Activated B cell treated with CpG ODN at 0.5 μM for 24 hours (primary cell): ENCODE measurements at regions of chr6 and their contacts with region 1.

Region 1: GRCh38 chr6:54665278-54665677 is 181.3 kb upstream of the FAM83B start:
- DNase-seq: no peak
- ATAC-seq: no peak
- H3K4me3 Mint-ChIP-seq: no peak overlapping the region
- H3K27ac Mint-ChIP-seq: no peak overlapping the region
- H3K4me1 Mint-ChIP-seq: no peaks in the 10 kb centered on the region
- H3K27me3 Mint-ChIP-seq: no peaks in the 10 kb centered on the region
- CTCF ChIP-seq: no peak

Region 2: GRCh38 chr6:54655162-54655561 is 10.1 kb before region 1 on chr6:
- CTCF ChIA-PET with region 1: no interaction called
- POLR2A ChIA-PET with region 1: interaction called, 15 read pairs
- intact Hi-C with region 1: no loop called
- DNase-seq: no peak
- ATAC-seq: no peak
- H3K4me3 Mint-ChIP-seq: no peak overlapping the region
- H3K27ac Mint-ChIP-seq: no peak overlapping the region
- H3K4me1 Mint-ChIP-seq: no peaks in the 10 kb centered on the region
- H3K27me3 Mint-ChIP-seq: no peaks in the 10 kb centered on the region
- CTCF ChIP-seq: no peak